Dendritic cell treated with granulocyte-macrophage colony-stimulating factor and Interleukin-4, amounts not matched to agents 40 ng/mL and 50 ng/mL, for 4 days (primary cell): ENCODE measurements at regions of chr4 and their contacts with region 1.

Region 1: GRCh38 chr4:184616633-184617551 is 32.4 kb downstream of the CASP3 start:
- H3K4me3 Mint-ChIP-seq: peak overlapping the region; percentile 24
- H3K27ac Mint-ChIP-seq: peak overlapping the region; percentile 86
- H3K4me1 Mint-ChIP-seq: peaks cover 58% of the 10 kb centered on the region
- H3K27me3 Mint-ChIP-seq: no peaks in the 10 kb centered on the region

Region 2: GRCh38 chr4:184544788-184545409 is 72.0 kb before region 1 on chr4:
- intact Hi-C with region 1: loop called (anchors 10 kb)
- H3K4me3 Mint-ChIP-seq: no peak overlapping the region
- H3K27ac Mint-ChIP-seq: no peak overlapping the region
- H3K4me1 Mint-ChIP-seq: peaks cover 34% of the 10 kb centered on the region
- H3K27me3 Mint-ChIP-seq: no peaks in the 10 kb centered on the region

Region 3: GRCh38 chr4:184649026-184649970 is 32.4 kb after region 1 on chr4 and contains the starts of genes CASP3 and PRIMPOL:
- intact Hi-C with region 1: no loop called
- H3K4me3 Mint-ChIP-seq: peak within 1 kb of the TSS; percentile 87
- H3K27ac Mint-ChIP-seq: peak within 1 kb of the TSS; percentile 90
- H3K4me1 Mint-ChIP-seq: peaks cover 40% of the 10 kb centered on the region
- H3K27me3 Mint-ChIP-seq: no peaks in the 10 kb centered on the region